B cell (primary cell): ENCODE measurements at regions of chr9 and their contacts with region 1.

Region 1: DNA sequence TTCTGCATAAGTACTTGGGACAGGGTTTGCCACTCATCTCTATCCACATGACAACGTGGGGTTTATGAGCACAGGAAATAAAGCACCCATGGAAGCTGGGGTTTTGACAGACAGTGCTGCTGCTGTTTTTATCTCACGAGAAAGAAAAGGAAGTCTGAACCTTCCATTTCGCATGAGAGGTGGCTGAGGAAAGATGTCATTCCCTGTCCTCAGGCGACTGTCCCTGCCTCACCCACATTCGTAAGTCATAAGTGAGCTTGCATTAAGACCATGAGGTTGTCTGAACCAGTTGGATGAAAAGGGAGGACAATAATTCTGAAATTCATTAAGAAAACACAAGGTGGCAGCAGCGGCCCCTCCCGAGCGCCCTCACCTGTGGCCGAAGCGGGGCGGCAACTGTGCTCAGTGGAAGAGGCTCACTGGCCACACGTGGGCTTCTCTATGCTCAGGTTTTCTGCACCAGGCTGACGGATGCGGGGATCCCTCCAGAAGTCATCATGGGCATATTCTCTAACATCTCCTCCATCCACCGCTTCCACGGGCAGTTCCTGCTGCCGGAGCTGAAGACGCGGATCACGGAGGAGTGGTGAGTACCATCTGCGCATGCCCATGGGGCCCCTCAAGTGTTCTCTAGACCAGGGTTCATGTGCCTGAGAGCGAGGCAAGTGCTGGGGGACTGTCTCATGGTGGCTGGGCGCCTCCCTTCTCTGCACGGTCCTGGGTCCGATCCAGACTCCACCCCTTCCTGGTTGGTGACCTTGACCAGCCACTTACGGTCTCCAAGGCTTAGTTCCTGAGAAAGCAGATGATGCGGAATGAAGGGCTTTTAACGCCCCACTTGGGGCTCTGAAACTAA is 54.7 kb upstream of the SUSD3 start:
- DNase-seq: peak; percentile 72
- ATAC-seq: peak; percentile 72
- H3K4me3 ChIP-seq: no peak overlapping the region
- H3K4me3 Mint-ChIP-seq: no peak overlapping the region
- H3K27ac ChIP-seq: no peak overlapping the region
- H3K27ac Mint-ChIP-seq: peak overlapping the region; percentile 6
- H3K4me1 ChIP-seq: peaks cover 0 to 3% of the 10 kb centered on the region in 2 donors
- H3K4me1 Mint-ChIP-seq: peaks cover 25% of the 10 kb centered on the region
- H3K27me3 ChIP-seq: no peaks in the 10 kb centered on the region
- H3K27me3 Mint-ChIP-seq: no peaks in the 10 kb centered on the region
- CTCF ChIP-seq: peak; percentile 75

Region 2: GRCh38 chr9:92738661-92739081 is 265.1 kb before region 1 on chr9:
- CTCF ChIA-PET with region 1: no interaction called
- POLR2A ChIA-PET with region 1: no interaction called
- intact Hi-C with region 1: no loop called
- DNase-seq: no peak
- ATAC-seq: no peak
- H3K4me3 ChIP-seq: no peak overlapping the region
- H3K4me3 Mint-ChIP-seq: no peak overlapping the region
- H3K27ac ChIP-seq: peak overlapping the region in 1 of 2 donors; percentile 63
- H3K27ac Mint-ChIP-seq: peak overlapping the region; percentile 67
- H3K4me1 ChIP-seq: peaks cover 77 to 87% of the 10 kb centered on the region in 2 donors
- H3K4me1 Mint-ChIP-seq: peaks cover 89% of the 10 kb centered on the region
- H3K27me3 ChIP-seq: no peaks in the 10 kb centered on the region
- H3K27me3 Mint-ChIP-seq: no peaks in the 10 kb centered on the region
- CTCF ChIP-seq: no peak

Region 3: DNA sequence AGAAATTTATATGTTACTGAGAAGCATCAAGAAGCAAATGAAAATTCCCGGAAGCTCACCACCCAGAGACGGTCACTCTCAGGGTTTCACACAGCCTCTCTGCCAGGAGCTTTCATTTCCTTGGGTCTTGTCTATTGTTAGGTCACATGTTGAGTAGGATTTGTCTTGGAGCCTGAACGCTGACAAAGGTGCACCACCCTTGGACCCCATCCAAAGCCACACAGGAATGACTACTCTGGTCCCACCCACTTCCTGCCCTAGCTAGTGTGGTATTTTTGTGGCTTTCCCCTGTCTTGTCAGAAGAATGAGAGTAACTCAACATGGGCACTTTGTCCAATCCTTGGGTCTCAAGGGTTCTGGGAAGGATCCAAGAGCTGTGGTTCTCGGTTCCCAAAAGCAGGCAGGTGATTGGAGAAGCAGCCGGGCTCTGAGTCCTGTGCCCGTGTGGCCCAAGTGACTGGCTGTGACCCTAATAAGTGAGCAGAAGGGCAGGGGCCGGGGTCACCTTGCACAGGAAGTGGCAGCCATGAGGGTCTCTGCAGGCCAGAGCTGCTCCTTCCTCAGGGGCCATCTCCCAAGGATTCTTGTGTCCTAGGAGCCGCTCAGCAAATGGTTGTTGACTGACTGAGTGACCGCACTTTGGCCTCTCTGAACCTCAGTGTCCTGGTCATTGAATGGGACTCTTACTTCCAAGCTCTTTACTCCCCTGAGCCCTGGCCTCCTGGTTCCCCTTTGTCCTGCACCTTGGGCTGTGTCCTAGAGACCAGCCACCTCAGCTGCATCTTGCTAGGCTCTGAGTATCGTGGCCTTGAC is 49.5 kb before region 1 on chr9:
- CTCF ChIA-PET with region 1: interaction called, 21 read pairs
- POLR2A ChIA-PET with region 1: no interaction called
- intact Hi-C with region 1: loop called (anchors 2 kb)
- DNase-seq: peak; percentile 37
- ATAC-seq: peak; percentile 53
- H3K4me3 ChIP-seq: peak overlapping the region in 4 of 5 experiments; percentile 7 to 45 (median 34)
- H3K4me3 Mint-ChIP-seq: peak overlapping the region; percentile 61
- H3K27ac ChIP-seq: peak overlapping the region in 1 of 2 donors; percentile 23
- H3K27ac Mint-ChIP-seq: peak overlapping the region; percentile 26
- H3K4me1 ChIP-seq: peaks cover 16 to 17% of the 10 kb centered on the region in 2 donors
- H3K4me1 Mint-ChIP-seq: peaks cover 24% of the 10 kb centered on the region
- H3K27me3 ChIP-seq: peaks cover 0 to 7% (median 0%) of the 10 kb centered on the region in 4 experiments
- H3K27me3 Mint-ChIP-seq: peaks cover 6% of the 10 kb centered on the region
- CTCF ChIP-seq: no peak

Region 4: DNA sequence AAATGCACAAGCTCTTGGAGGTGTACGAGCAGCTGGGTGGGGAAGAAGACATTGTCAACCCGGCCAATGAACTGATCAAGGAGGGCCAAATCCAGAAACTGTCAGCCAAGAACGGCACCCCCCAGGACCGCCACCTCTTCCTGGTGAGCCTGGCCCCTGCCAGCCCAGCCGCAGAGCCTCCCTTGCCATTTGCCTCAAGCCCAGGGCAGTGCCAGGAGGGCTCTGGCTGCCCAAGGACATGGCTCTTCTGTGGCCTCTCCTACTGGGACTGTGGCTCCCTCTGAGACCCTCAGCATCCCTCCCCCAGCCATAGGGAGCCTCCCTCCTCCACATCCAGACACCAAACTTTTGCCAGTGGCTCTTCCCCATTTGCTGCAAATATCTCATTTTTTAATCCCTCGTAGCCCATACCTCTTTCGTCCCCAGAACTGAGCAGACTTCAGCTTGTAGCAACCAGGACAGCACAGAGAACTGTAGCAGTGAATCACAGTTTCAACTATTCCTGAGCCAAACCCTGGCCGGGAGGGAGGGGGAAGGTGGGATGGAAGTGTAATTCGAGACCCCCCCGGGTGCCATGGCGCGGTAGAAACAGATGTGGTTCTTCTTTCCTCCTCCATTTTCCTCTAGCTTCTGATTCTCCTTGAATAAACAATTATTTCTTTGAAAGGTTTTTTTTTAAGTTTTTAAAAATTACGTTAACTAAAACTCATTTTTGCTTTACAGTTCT is 10.2 kb after region 1 on chr9:
- CTCF ChIA-PET with region 1: interaction called, 10 read pairs
- POLR2A ChIA-PET with region 1: no interaction called
- intact Hi-C with region 1: no loop called
- DNase-seq: no peak
- ATAC-seq: no peak
- H3K4me3 ChIP-seq: no peak overlapping the region
- H3K4me3 Mint-ChIP-seq: no peak overlapping the region
- H3K27ac ChIP-seq: no peak overlapping the region
- H3K27ac Mint-ChIP-seq: no peak overlapping the region
- H3K4me1 ChIP-seq: no peaks in the 10 kb centered on the region
- H3K4me1 Mint-ChIP-seq: no peaks in the 10 kb centered on the region
- H3K27me3 ChIP-seq: no peaks in the 10 kb centered on the region
- H3K27me3 Mint-ChIP-seq: no peaks in the 10 kb centered on the region
- CTCF ChIP-seq: no peak

Region 5: DNA sequence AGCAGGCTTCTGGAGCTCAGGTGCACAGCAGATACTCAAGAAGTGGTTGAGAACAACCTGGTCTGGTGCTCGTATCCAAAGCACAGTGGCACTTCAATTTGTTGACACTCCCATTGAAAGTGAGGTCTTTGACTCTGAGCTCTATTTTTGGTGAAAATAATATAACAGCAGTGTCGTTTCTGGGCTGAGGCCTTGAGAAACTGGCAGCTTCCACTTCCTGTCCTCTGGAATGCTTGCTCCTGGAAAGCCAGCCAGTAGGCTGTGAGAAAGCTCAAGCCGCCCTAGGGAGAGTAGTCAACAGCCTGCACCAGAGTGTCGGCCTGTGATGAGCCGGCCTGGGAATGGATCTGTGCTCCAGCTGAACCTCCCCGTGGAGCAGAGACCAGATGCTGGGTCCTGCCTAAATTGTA is 47.9 kb after region 1 on chr9:
- CTCF ChIA-PET with region 1: interaction called, 11 read pairs
- POLR2A ChIA-PET with region 1: no interaction called
- intact Hi-C with region 1: no loop called
- DNase-seq: no peak
- ATAC-seq: no peak
- H3K4me3 ChIP-seq: no peak overlapping the region
- H3K4me3 Mint-ChIP-seq: no peak overlapping the region
- H3K27ac ChIP-seq: no peak overlapping the region
- H3K27ac Mint-ChIP-seq: peak overlapping the region; percentile 20
- H3K4me1 ChIP-seq: peaks cover 0 to 4% of the 10 kb centered on the region in 2 donors
- H3K4me1 Mint-ChIP-seq: peaks cover 11% of the 10 kb centered on the region
- H3K27me3 ChIP-seq: no peaks in the 10 kb centered on the region
- H3K27me3 Mint-ChIP-seq: no peaks in the 10 kb centered on the region
- CTCF ChIP-seq: no peak

Region 6: GRCh38 chr9:93064392-93065134 is 60.8 kb after region 1 on chr9:
- CTCF ChIA-PET with region 1: interaction called, 14 read pairs
- POLR2A ChIA-PET with region 1: no interaction called
- intact Hi-C with region 1: loop called (anchors 1 kb)
- DNase-seq: peak; percentile 89
- ATAC-seq: peak; percentile 78
- H3K4me3 ChIP-seq: peak overlapping the region in 4 of 5 experiments; percentile 5 to 36 (median 18)
- H3K4me3 Mint-ChIP-seq: peak overlapping the region; percentile 92
- H3K27ac ChIP-seq: peak overlapping the region; percentile 74 to 78
- H3K27ac Mint-ChIP-seq: peak overlapping the region; percentile 99
- H3K4me1 ChIP-seq: peaks cover 63 to 65% of the 10 kb centered on the region in 2 donors
- H3K4me1 Mint-ChIP-seq: peaks cover 81% of the 10 kb centered on the region
- H3K27me3 ChIP-seq: no peaks in the 10 kb centered on the region
- H3K27me3 Mint-ChIP-seq: no peaks in the 10 kb centered on the region
- CTCF ChIP-seq: no peak

Region 7: DNA sequence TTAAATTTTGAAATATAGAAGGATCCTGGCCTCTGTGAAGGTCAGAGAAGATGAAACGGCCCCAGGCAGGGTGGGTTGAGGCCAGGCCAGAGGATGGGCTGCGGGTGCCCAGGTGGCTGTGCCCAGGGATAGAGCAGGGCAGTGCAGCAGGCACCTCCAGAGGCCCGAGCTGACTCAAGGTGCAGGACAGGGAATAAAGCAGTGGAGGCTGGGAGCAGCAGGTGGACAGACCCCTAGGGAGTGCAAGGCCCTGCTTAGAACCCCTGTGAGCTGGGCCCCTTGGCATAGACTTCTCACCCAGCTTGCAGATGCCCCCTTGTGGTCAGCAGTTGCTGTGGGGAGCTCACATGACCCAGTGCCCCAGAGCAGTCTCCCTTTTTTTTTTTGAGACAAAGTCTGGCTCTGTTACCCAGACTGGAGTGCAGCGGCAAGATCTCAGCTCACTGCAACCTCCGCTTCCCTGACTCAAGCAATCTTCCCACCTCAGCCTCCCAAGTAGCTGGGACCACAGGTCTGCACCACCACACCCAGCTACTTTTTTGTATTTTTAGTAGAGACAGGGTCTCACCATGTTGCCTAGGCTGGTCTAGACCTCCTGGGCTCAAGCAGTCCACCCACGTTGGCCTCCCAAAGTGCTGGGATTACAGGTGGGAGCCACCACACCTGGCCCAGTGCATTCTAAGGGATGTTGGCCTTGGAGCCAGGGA is 298.9 kb after region 1 on chr9:
- CTCF ChIA-PET with region 1: interaction called, 10 read pairs
- POLR2A ChIA-PET with region 1: no interaction called
- intact Hi-C with region 1: no loop called
- DNase-seq: peak; percentile 82
- ATAC-seq: peak; percentile 82
- H3K4me3 ChIP-seq: no peak overlapping the region
- H3K4me3 Mint-ChIP-seq: no peak overlapping the region
- H3K27ac ChIP-seq: no peak overlapping the region
- H3K27ac Mint-ChIP-seq: no peak overlapping the region
- H3K4me1 ChIP-seq: peaks cover 0 to 5% of the 10 kb centered on the region in 2 donors
- H3K4me1 Mint-ChIP-seq: no peaks in the 10 kb centered on the region
- H3K27me3 ChIP-seq: no peaks in the 10 kb centered on the region
- H3K27me3 Mint-ChIP-seq: peaks cover 7% of the 10 kb centered on the region
- CTCF ChIP-seq: peak; percentile 62